ENCODE measurements at regions of chr17 and their contacts with region 1.

Region 1: DNA sequence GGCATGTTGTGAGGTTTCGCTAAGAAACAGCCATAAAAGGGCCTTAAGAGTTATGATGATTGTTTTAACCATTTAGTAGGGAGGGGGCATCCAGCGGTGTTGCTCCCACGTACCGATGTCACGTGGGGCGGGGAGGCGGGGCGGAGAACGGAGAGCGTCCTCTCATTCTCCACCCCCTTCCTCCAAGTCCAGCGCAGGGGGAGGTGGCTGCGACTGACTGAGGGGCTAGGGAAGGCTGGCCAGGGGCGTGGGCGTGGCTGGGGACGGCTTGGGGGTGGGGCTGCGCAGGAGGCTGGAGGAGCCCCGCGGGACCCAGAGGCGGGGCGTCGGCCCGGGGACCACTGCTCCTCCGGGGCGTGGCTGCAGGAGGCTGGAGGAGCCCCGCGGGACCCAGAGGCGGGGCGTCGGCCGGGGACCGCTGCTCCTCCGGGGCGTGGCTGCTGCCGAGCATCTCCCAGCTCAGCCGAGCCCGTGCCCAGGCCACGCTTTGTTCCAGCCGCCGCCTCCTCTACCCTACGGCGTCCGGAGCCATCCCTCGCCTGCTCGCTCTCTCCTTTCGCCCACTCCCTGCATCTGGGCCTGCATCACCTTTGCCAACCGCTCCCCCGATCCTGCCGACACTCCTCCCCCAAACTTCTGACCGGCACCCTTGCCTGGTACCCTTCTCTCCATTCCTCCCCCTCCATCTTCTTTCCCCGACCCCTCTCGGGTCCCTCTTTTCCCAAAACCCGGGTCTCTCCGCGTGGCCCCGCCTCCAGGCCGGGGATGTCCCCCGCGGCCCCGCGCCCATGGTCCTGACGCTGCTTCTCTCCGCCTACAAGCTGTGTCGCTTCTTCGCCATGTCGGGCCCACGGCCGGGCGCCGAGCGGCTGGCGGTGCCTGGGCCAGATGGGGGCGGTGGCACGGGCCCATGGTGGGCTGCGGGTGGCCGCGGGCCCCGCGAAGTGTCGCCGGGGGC is at the start of gene SARM1:
- DNase-seq: peak; percentile 31
- ATAC-seq: peak; percentile 96
- H3K4me3 ChIP-seq: peak within 1 kb of the TSS; percentile 17 to 50; a peak in 3 of 4 replicates
- H3K27ac ChIP-seq: no peak within 1 kb of the TSS
- H3K4me1 ChIP-seq: peaks cover 11 to 20% of the 10 kb centered on the region in 2 experiments; a peak in 3 of 4 replicates
- H3K27me3 ChIP-seq: no peaks in the 10 kb centered on the region
- CTCF ChIP-seq: no peak
- POLR2A ChIP-seq: no peak
- RAD21 ChIP-seq: no peak
- total RNA-seq, gene SARM1: 1.3 TPM

Region 2: GRCh38 chr17:28161311-28161710 is 210.2 kb before region 1 on chr17:
- CTCF ChIA-PET with region 1: no interaction called
- POLR2A ChIA-PET with region 1: no interaction called
- RAD21 ChIA-PET with region 1: no interaction called
- intact Hi-C with region 1: no loop called
- DNase-seq: no peak
- ATAC-seq: no peak
- H3K4me3 ChIP-seq: no peak overlapping the region
- H3K27ac ChIP-seq: no peak overlapping the region
- H3K4me1 ChIP-seq: no peaks in the 10 kb centered on the region
- H3K27me3 ChIP-seq: no peaks in the 10 kb centered on the region
- CTCF ChIP-seq: no peak
- POLR2A ChIP-seq: no peak
- RAD21 ChIP-seq: no peak

Region 3: GRCh38 chr17:28295677-28296578 is 75.6 kb before region 1 on chr17:
- CTCF ChIA-PET with region 1: no interaction called
- POLR2A ChIA-PET with region 1: no interaction called
- RAD21 ChIA-PET with region 1: no interaction called
- intact Hi-C with region 1: no loop called
- DNase-seq: no peak
- ATAC-seq: no peak
- H3K4me3 ChIP-seq: no peak overlapping the region
- H3K27ac ChIP-seq: no peak overlapping the region
- H3K4me1 ChIP-seq: peaks cover 0 to 4% of the 10 kb centered on the region in 2 experiments; a peak in 1 of 4 replicates
- H3K27me3 ChIP-seq: no peaks in the 10 kb centered on the region
- CTCF ChIP-seq: no peak
- POLR2A ChIP-seq: no peak
- RAD21 ChIP-seq: no peak

Region 4: GRCh38 chr17:28318759-28319660 is 52.5 kb before region 1 on chr17 and contains the start of gene TMEM97:
- CTCF ChIA-PET with region 1: no interaction called
- POLR2A ChIA-PET with region 1: no interaction called
- RAD21 ChIA-PET with region 1: no interaction called
- intact Hi-C with region 1: loop called (anchors 10 kb)
- DNase-seq: peak; percentile 90
- ATAC-seq: peak; percentile 97
- H3K4me3 ChIP-seq: peak within 1 kb of the TSS; percentile 86 to 95
- H3K27ac ChIP-seq: peak within 1 kb of the TSS; percentile 71
- H3K4me1 ChIP-seq: peaks cover 12 to 26% of the 10 kb centered on the region in 2 experiments; a peak in 3 of 4 replicates
- H3K27me3 ChIP-seq: no peaks in the 10 kb centered on the region
- CTCF ChIP-seq: 0 out of 6 replicates have a peak, but pooled peaks of 1 of the 3 experiments have one; percentile 2
- POLR2A ChIP-seq: peak; percentile 29
- RAD21 ChIP-seq: no peak
- total RNA-seq, gene TMEM97: 55.6 TPM

Region 5: DNA sequence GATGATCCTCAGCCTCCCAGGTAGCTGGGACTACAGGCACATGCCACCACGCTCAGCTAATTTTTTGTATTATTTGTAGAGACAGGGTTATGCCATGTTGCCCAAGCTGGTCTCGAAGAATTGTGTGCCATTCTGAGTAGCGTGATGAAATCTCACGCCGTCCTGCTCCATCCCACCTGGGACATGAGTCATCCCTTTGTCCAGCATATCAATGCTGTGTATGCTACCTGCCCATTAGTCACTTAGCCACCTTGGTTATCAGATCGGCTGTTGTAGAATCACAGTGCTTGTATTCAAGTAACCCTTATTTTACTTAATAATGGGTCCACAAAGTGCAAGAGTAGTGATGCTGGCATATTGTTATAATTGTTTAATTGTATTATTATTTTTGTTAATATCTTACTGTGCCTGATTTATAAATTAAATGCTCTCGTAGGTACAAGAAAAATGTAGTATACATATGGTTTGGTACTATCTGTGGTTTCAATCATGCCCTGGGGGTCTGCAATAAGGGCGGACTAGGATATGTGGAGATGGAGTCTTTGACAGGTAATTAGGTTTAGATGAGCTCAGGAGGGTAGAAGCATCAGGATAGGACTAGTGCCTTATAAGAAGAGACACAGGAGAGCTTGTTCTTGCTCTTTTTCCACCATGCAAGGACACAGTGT is 75.3 kb after region 1 on chr17:
- CTCF ChIA-PET with region 1: no interaction called
- POLR2A ChIA-PET with region 1: no interaction called
- RAD21 ChIA-PET with region 1: no interaction called
- intact Hi-C with region 1: loop called (anchors 10 kb)
- DNase-seq: no peak
- ATAC-seq: no peak
- H3K4me3 ChIP-seq: no peak overlapping the region
- H3K27ac ChIP-seq: no peak overlapping the region
- H3K4me1 ChIP-seq: no peaks in the 10 kb centered on the region
- H3K27me3 ChIP-seq: no peaks in the 10 kb centered on the region
- CTCF ChIP-seq: no peak
- POLR2A ChIP-seq: no peak
- RAD21 ChIP-seq: no peak

Region 6: DNA sequence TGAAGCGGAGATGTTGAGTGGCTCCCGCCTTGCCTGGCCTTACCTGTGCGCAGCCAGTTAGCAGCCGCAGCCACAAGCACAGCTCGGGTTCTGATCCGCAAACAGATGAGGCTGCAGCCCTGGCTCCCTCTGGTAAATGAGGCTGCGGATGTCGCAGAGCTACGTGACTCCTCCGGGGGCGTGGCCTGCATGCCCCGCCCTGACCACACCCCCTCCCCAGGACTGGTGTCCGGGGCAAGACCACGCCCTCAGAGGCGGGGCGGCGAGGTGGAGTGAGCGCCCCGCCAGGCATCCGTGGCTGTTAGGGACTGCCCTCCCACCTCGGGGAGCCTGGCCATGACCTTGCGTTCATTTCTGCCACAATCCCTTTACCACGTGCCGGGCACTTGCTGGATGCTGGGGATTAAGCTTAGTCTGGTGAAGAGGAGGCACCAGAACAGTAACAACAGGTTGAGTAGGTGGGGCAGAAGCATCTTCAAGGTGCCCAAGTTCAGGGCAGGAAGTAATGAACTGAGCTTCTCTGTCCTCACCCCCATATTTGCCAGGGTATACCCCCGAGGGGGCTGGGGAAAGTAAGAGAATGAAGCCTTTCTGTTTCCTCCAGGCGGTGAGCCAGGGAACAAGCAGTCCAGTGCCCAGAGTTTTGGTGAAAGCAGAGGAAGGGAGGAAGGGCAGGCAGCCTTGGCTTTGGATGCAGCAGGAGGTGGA is 205.4 kb after region 1 on chr17 and contains the start of gene ALDOC:
- CTCF ChIA-PET with region 1: no interaction called
- POLR2A ChIA-PET with region 1: no interaction called
- RAD21 ChIA-PET with region 1: no interaction called
- intact Hi-C with region 1: no loop called
- DNase-seq: peak; percentile 81
- ATAC-seq: peak; percentile 97
- H3K4me3 ChIP-seq: peak within 1 kb of the TSS; percentile 44 to 45
- H3K27ac ChIP-seq: peak within 1 kb of the TSS; percentile 60
- H3K4me1 ChIP-seq: peaks cover 6 to 16% of the 10 kb centered on the region in 2 experiments; a peak in 3 of 4 replicates
- H3K27me3 ChIP-seq: no peaks in the 10 kb centered on the region
- CTCF ChIP-seq: no peak
- POLR2A ChIP-seq: no peak
- RAD21 ChIP-seq: no peak
- total RNA-seq, gene ALDOC: 82.8 TPM